ENCODE measurements at regions of chr5 and their contacts with region 1.

Region 1: GRCh38 chr5:157306692-157307471 is 41.0 kb downstream of the CYFIP2 start:
- DNase-seq: no peak
- H3K4me3 Mint-ChIP-seq: peak overlapping the region; percentile 42
- H3K27ac Mint-ChIP-seq: peak overlapping the region; percentile 88
- H3K4me1 Mint-ChIP-seq: peaks cover 68% of the 10 kb centered on the region
- H3K27me3 Mint-ChIP-seq: no peaks in the 10 kb centered on the region

Region 2: GRCh38 chr5:157290981-157291711 is 15.7 kb before region 1 on chr5:
- intact Hi-C with region 1: loop called (anchors 2 kb)
- DNase-seq: no peak
- H3K4me3 Mint-ChIP-seq: no peak overlapping the region
- H3K27ac Mint-ChIP-seq: peak overlapping the region; percentile 84
- H3K4me1 Mint-ChIP-seq: peaks cover 65% of the 10 kb centered on the region
- H3K27me3 Mint-ChIP-seq: no peaks in the 10 kb centered on the region